BJ (cell line): ENCODE measurements at regions of chr9 and their contacts with region 1.

Region 1: GRCh38 chr9:87324613-87325194 is 173.0 kb upstream of the DAPK1 start:
- DNase-seq: no peak
- H3K4me3 ChIP-seq: no peak overlapping the region
- H3K27me3 ChIP-seq: no peaks in the 10 kb centered on the region
- CTCF ChIP-seq: peak; percentile 52

Region 2: GRCh38 chr9:86413966-86414880 is 910.5 kb before region 1 on chr9:
- CTCF ChIA-PET with region 1: interaction called, 13 read pairs
- POLR2A ChIA-PET with region 1: no interaction called
- DNase-seq: no peak
- H3K4me3 ChIP-seq: no peak overlapping the region
- H3K27me3 ChIP-seq: no peaks in the 10 kb centered on the region; the same call in 1 of the 2 replicates
- CTCF ChIP-seq: peak; percentile 51

Region 3: DNA sequence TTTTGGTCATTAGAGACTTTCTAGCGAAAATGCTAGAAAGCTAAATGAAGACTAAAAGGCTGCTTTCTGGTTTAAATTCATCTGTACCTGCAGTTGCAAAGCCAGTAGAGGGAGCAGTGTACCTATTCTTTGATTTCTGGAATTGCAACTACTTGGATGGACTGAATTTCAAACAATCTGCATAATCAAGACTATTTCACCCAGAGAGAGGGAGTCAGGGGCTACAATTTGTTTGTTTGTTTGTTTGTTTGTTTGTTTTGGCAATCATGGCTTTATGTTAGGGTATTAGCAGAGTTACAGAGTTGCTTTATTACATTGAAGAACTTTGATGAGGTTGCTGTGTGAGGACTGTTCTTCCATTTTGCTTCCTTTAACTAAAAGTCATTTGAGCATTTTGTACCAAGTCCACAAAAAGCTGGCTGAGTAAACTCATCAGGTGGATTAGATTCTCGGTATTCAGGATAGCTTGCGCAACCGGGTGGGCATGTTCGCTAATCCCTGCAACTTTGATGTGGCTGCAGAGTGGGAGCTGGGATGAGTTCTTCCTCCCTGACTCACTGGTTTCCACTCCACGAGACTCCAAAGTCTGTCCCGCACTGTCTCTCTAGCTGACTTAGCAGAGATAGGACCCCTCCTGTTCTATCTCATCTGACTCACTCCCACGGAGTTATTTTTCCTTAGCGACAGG is 890.5 kb before region 1 on chr9:
- CTCF ChIA-PET with region 1: interaction called, 43 read pairs
- POLR2A ChIA-PET with region 1: no interaction called
- DNase-seq: no peak
- H3K4me3 ChIP-seq: no peak overlapping the region
- H3K27me3 ChIP-seq: no peaks in the 10 kb centered on the region
- CTCF ChIP-seq: peak; percentile 78

Region 4: GRCh38 chr9:86948074-86948929 is 376.4 kb before region 1 on chr9:
- CTCF ChIA-PET with region 1: interaction called, 31 read pairs
- POLR2A ChIA-PET with region 1: interaction called, 6 read pairs
- DNase-seq: no peak
- H3K4me3 ChIP-seq: peak overlapping the region; percentile 46
- H3K27me3 ChIP-seq: no peaks in the 10 kb centered on the region
- CTCF ChIP-seq: peak; percentile 99

Region 5: GRCh38 chr9:87309236-87309635 is 15.5 kb before region 1 on chr9:
- CTCF ChIA-PET with region 1: no interaction called
- POLR2A ChIA-PET with region 1: no interaction called
- DNase-seq: no peak
- H3K4me3 ChIP-seq: no peak overlapping the region
- H3K27me3 ChIP-seq: no peaks in the 10 kb centered on the region
- CTCF ChIP-seq: no peak